ENCODE measurements at regions of chr1 and their contacts with region 1.

Region 1: GRCh38 chr1:61808968-61809367 is 66.7 kb downstream of the PATJ start:
- DNase-seq: no peak

Region 2: GRCh38 chr1:61190618-61191432 is 618.1 kb before region 1 on chr1:
- intact Hi-C with region 1: loop called in 1 of 2 experiments (anchors 5 kb)
- DNase-seq: no peak

Region 3: GRCh38 chr1:61741711-61742619 is 67.0 kb before region 1 on chr1 and contains the start of gene PATJ:
- intact Hi-C with region 1: no loop called
- DNase-seq: peak; percentile 87
- total RNA-seq, gene PATJ: 15.2 to 23.5 TPM